ENCODE measurements at regions of chr22 and their contacts with region 1.

Region 1: GRCh38 chr22:24938741-24939341 is 7.7 kb downstream of the LHFPL7 start:
- DNase-seq: peak; percentile 49
- ATAC-seq: peak; percentile 78
- H3K4me3 ChIP-seq: no peak overlapping the region
- H3K27ac ChIP-seq: no peak overlapping the region
- H3K4me1 ChIP-seq: peaks cover 14% of the 10 kb centered on the region
- H3K27me3 ChIP-seq: peaks cover 0 to 5% of the 10 kb centered on the region in 2 experiments; a peak in 1 of 5 replicates
- CTCF ChIP-seq: peak; percentile 83
- EP300 ChIP-seq: no peak
- POLR2A ChIP-seq: no peak
- RAD21 ChIP-seq: peak; percentile 60

Region 2: DNA sequence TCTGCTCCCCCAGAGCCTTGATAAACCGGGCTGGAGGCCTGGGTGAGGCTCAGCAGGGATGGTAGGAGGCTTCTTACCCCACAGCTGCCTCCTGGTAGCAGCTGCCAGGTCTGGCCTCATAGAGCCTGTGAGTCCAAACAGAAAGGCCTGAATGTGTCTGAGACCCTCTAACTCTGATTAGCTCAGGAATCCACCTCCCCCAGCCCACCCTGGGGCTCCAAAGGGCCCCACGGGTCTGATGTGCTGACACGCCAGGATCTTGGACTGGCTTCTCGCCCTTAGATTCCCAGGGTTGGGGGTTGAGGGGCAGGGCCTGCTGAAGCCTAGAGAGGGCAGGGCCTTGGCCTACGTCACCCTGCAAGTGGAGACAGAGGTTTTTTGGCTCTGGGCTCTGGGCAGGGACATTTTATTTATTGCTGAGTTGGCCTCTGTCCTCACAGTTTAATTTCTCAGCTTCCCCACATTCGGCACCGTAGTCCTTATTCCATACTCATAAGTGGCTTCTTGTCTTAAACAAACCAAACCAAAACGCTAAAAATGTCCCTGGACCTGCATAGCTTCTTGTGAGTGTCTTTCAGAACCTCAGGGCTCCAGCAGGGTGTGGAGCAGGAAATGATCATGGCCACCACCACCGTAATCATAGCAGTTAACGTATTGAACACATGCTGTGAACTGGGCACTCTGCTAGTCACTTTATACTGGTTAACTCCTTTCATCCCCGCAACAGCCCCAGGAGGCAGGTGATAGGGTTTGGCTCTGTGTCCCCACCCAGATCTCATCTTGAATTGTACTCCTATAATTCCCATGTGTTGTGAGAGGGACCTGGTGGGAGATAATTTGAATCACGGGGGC is 38.8 kb after region 1 on chr22:
- CTCF ChIA-PET with region 1: no interaction called
- POLR2A ChIA-PET with region 1: no interaction called
- in situ Hi-C with region 1: no loop called
- intact Hi-C with region 1: no loop called
- DNase-seq: no peak
- ATAC-seq: no peak
- H3K4me3 ChIP-seq: no peak overlapping the region
- H3K27ac ChIP-seq: no peak overlapping the region
- H3K4me1 ChIP-seq: peaks cover 19% of the 10 kb centered on the region
- H3K27me3 ChIP-seq: no peaks in the 10 kb centered on the region
- CTCF ChIP-seq: no peak
- EP300 ChIP-seq: no peak
- POLR2A ChIP-seq: no peak
- RAD21 ChIP-seq: no peak

Region 3: GRCh38 chr22:25048659-25049647 is 110.1 kb after region 1 on chr22:
- CTCF ChIA-PET with region 1: interaction called, 23 read pairs
- POLR2A ChIA-PET with region 1: no interaction called
- in situ Hi-C with region 1: loop called (anchors 10 kb)
- intact Hi-C with region 1: loop called (anchors 1 kb)
- DNase-seq: peak; percentile 62
- ATAC-seq: peak; percentile 89
- H3K4me3 ChIP-seq: no peak overlapping the region
- H3K27ac ChIP-seq: no peak overlapping the region
- H3K4me1 ChIP-seq: peaks cover 27% of the 10 kb centered on the region
- H3K27me3 ChIP-seq: no peaks in the 10 kb centered on the region
- CTCF ChIP-seq: peak; percentile 92
- EP300 ChIP-seq: no peak
- POLR2A ChIP-seq: no peak
- RAD21 ChIP-seq: peak; percentile 84

Region 4: DNA sequence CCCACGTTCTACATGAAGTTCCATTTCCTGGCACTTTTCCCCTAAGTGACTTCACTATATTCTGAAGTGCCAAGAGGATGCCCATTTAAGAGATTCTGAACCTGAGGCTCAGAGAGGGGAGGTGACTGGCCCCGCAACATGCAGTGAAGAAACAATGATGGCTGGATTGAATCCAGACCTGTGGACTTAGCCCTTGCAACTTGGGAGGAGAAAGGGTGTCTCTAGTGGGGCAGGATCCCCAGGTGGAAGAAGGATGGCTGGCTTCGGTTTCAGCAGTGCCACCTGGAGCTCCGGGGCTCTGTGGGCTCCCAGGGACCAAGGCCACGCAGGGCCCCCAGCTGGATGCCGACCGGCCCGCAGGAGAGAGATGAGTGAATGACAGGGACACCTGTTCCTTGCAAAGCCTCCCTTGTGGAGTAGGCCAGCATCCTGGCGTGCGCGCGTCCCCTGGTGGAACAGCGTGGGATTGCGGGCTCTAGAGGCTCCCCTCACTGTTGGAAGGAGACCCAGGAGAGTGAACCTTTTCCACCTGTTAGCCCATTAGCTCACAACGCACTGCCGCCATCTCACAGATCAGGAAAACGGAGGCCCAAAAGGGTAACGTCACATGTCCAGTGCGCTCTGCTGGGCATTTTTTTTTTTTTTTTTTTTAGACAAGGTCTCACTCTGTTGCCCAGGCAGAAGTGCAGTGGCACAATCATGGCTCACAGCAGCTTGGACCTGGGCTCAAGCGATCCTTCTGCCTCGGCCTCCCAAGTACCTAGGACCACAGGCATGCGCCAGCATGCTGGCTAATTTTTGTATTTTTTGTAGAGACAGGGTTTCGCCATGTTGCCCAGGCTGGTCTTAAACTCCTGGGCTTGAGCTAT is 118.4 kb after region 1 on chr22:
- CTCF ChIA-PET with region 1: interaction called, 13 read pairs
- POLR2A ChIA-PET with region 1: no interaction called
- in situ Hi-C with region 1: loop called (anchors 10 kb)
- intact Hi-C with region 1: loop called (anchors 2 kb)
- DNase-seq: peak; percentile 44
- ATAC-seq: peak; percentile 95
- H3K4me3 ChIP-seq: no peak overlapping the region
- H3K27ac ChIP-seq: no peak overlapping the region
- H3K4me1 ChIP-seq: peaks cover 27% of the 10 kb centered on the region
- H3K27me3 ChIP-seq: no peaks in the 10 kb centered on the region
- CTCF ChIP-seq: peak; percentile 80
- EP300 ChIP-seq: no peak
- POLR2A ChIP-seq: no peak
- RAD21 ChIP-seq: peak; percentile 64

Region 5: GRCh38 chr22:25193548-25193947 is 254.7 kb after region 1 on chr22:
- CTCF ChIA-PET with region 1: no interaction called
- POLR2A ChIA-PET with region 1: no interaction called
- in situ Hi-C with region 1: loop called (anchors 25 kb)
- intact Hi-C with region 1: no loop called
- DNase-seq: no peak
- ATAC-seq: no peak
- H3K4me3 ChIP-seq: no peak overlapping the region
- H3K27ac ChIP-seq: no peak overlapping the region
- H3K4me1 ChIP-seq: no peaks in the 10 kb centered on the region
- H3K27me3 ChIP-seq: no peaks in the 10 kb centered on the region
- CTCF ChIP-seq: no peak
- EP300 ChIP-seq: no peak
- POLR2A ChIP-seq: no peak
- RAD21 ChIP-seq: no peak

Measured in HepG2 (cell line).